Activated CD4-positive, alpha-beta memory T cell treated with anti-CD3 and anti-CD28 coated beads for 36 hours (primary cell): ENCODE measurements at regions of chr5 and their contacts with region 1.

Region 1: GRCh38 chr5:121962347-121962670 is 534 bp downstream of the SRFBP1 start:
- DNase-seq: no peak
- H3K4me3 Mint-ChIP-seq: peak overlapping the region; percentile 99
- H3K27ac Mint-ChIP-seq: peak overlapping the region; percentile 98
- H3K4me1 Mint-ChIP-seq: peaks cover 44% of the 10 kb centered on the region
- H3K27me3 Mint-ChIP-seq: peaks cover 12% of the 10 kb centered on the region

Region 2: GRCh38 chr5:121758615-121759014 is 203.7 kb before region 1 on chr5:
- CTCF ChIA-PET with region 1: no interaction called
- POLR2A ChIA-PET with region 1: no interaction called
- intact Hi-C with region 1: no loop called
- DNase-seq: no peak
- H3K4me3 Mint-ChIP-seq: no peak overlapping the region
- H3K27ac Mint-ChIP-seq: no peak overlapping the region
- H3K4me1 Mint-ChIP-seq: no peaks in the 10 kb centered on the region
- H3K27me3 Mint-ChIP-seq: no peaks in the 10 kb centered on the region

Region 3: DNA sequence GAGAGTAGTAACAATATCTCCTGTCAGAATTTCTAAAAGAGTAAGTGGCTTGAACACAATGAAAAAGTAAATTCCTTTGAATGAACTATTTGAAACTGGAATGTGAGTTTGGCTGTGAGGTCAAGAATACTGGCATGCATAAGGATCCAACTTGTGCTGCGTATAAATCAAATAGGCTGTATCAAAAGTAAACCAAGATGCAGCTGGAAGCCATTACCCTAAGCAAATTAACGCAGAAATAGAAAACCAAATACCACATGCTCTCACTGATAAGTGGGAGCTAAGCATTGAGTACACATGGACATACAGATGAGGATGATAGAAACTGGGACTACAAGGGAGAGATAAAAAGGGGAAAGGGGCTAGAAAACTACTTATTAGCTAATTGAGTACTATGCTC is 24.5 kb before region 1 on chr5:
- CTCF ChIA-PET with region 1: no interaction called
- POLR2A ChIA-PET with region 1: no interaction called
- intact Hi-C with region 1: no loop called
- DNase-seq: no peak
- H3K4me3 Mint-ChIP-seq: no peak overlapping the region
- H3K27ac Mint-ChIP-seq: no peak overlapping the region
- H3K4me1 Mint-ChIP-seq: no peaks in the 10 kb centered on the region
- H3K27me3 Mint-ChIP-seq: peaks cover 18% of the 10 kb centered on the region

Region 4: GRCh38 chr5:121949867-121950266 is 12.4 kb before region 1 on chr5:
- CTCF ChIA-PET with region 1: interaction called, 15 read pairs
- POLR2A ChIA-PET with region 1: no interaction called
- intact Hi-C with region 1: no loop called
- DNase-seq: peak; percentile 9
- H3K4me3 Mint-ChIP-seq: no peak overlapping the region
- H3K27ac Mint-ChIP-seq: no peak overlapping the region
- H3K4me1 Mint-ChIP-seq: no peaks in the 10 kb centered on the region
- H3K27me3 Mint-ChIP-seq: peaks cover 2% of the 10 kb centered on the region

Region 5: DNA sequence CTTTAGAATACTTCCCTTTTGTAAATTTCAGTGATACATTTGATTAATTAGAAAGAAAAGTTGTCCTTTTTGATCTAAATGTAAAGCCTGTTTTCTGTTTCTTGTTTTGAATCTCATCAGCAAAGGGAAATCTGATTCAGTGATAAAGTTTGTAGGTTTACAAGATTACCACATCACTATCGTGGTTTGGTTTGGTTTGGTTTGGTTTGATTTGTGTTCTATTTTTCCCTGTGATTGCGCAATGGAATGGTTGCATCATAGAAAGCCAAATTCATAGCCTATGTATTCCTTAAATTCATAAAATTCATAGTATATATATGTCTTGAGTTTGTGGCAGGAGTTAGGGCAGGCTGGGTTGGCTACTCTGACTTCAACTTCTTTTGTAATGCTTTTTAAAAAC is 14.7 kb after region 1 on chr5:
- CTCF ChIA-PET with region 1: no interaction called
- POLR2A ChIA-PET with region 1: no interaction called
- intact Hi-C with region 1: loop called (anchors 1 kb)
- DNase-seq: no peak
- H3K4me3 Mint-ChIP-seq: no peak overlapping the region
- H3K27ac Mint-ChIP-seq: no peak overlapping the region
- H3K4me1 Mint-ChIP-seq: peaks cover 35% of the 10 kb centered on the region
- H3K27me3 Mint-ChIP-seq: no peaks in the 10 kb centered on the region

Region 6: GRCh38 chr5:122009436-122009835 is 47.1 kb after region 1 on chr5:
- CTCF ChIA-PET with region 1: interaction called, 3 read pairs
- POLR2A ChIA-PET with region 1: interaction called, 5 read pairs
- intact Hi-C with region 1: loop called (anchors 1 kb)
- DNase-seq: no peak
- H3K4me3 Mint-ChIP-seq: no peak overlapping the region
- H3K27ac Mint-ChIP-seq: no peak overlapping the region
- H3K4me1 Mint-ChIP-seq: peaks cover 28% of the 10 kb centered on the region
- H3K27me3 Mint-ChIP-seq: no peaks in the 10 kb centered on the region

Region 7: DNA sequence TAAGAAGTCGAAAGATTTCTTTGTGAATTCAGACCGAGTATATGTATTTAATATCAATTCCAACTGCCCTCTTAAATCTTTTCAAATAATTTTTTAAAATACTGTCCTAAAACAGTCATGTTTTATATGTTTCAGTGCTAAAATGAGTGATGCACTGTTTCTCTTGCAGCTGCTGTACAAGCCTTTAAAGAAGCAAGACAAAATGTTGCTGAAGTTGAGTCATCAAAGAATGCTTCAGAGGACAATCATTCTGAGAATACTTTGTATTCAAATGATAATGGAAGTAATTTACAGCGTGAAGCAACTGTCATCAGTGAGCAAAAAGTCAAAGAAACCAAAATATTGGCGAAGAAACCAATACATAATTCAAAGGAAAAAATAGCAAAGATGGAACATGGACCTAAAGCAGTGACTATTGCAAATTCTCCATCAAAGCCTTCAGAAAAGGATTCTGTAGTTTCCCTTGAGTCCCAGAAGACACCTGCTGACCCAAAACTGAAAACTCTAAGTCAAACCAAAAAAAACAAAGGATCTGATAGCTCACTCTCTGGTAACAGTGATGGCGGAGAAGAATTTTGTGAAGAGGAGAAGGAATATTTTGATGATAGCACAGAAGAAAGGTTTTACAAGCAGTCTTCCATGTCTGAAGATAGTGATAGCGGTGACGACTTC is 57.7 kb after region 1 on chr5:
- CTCF ChIA-PET with region 1: no interaction called
- POLR2A ChIA-PET with region 1: no interaction called
- intact Hi-C with region 1: loop called (anchors 1 kb)
- DNase-seq: no peak
- H3K4me3 Mint-ChIP-seq: peak overlapping the region; percentile 13
- H3K27ac Mint-ChIP-seq: peak overlapping the region; percentile 42
- H3K4me1 Mint-ChIP-seq: peaks cover 14% of the 10 kb centered on the region
- H3K27me3 Mint-ChIP-seq: no peaks in the 10 kb centered on the region

Region 8: DNA sequence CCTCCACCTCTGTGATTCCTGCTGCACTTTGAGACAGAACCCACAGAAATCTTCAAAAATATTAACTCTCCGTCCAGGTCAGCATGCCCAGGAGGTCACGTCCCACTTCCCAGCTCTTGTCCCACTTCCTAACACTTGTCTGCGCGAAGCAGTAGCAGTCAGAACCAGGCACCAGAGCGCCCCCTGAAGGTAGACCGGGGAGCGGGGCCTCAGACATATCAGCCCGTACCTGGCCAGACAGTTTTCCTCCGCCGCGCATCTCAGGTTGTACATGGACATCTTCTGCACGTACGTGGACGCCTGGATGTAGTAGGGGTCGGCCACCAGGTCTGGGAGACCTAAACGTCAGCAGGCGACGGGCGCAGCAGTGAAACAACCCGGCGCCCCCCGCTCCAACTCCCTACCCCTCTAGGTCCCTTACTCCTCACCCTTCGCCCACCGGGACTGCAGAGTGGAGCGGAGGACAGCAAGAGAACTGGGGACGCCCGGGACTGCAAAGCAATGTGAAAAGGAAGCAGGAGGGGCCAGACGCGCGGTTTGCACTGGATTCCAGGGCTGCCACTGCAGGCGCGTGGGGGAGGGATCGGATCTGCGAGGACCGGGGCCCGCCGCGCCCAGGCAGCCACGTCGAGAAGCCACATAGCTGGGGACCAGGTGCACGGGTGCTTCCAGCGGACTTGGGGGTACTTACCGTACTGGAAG is 114.5 kb after region 1 on chr5:
- CTCF ChIA-PET with region 1: no interaction called
- POLR2A ChIA-PET with region 1: no interaction called
- intact Hi-C with region 1: loop called (anchors 1 kb)
- DNase-seq: peak; percentile 72
- H3K4me3 Mint-ChIP-seq: peak overlapping the region; percentile 60
- H3K27ac Mint-ChIP-seq: no peak overlapping the region
- H3K4me1 Mint-ChIP-seq: peaks cover 17% of the 10 kb centered on the region
- H3K27me3 Mint-ChIP-seq: peaks cover 48% of the 10 kb centered on the region